ENCODE measurements at regions of chr16 and their contacts with region 1.

Region 1: GRCh38 chr16:3282730-3283524 is at the start of gene ZNF263:
- DNase-seq: peak; percentile 89
- ATAC-seq: peak; percentile 87
- H3K4me3 Mint-ChIP-seq: peak within 1 kb of the TSS; percentile 95
- H3K27ac Mint-ChIP-seq: peak within 1 kb of the TSS; percentile 99
- H3K4me1 Mint-ChIP-seq: peaks cover 40% of the 10 kb centered on the region
- H3K27me3 Mint-ChIP-seq: no peaks in the 10 kb centered on the region
- CTCF ChIP-seq: no peak
- total RNA-seq, gene ZNF263: 42.7 and 42.9 TPM in 2 replicates

Region 2: DNA sequence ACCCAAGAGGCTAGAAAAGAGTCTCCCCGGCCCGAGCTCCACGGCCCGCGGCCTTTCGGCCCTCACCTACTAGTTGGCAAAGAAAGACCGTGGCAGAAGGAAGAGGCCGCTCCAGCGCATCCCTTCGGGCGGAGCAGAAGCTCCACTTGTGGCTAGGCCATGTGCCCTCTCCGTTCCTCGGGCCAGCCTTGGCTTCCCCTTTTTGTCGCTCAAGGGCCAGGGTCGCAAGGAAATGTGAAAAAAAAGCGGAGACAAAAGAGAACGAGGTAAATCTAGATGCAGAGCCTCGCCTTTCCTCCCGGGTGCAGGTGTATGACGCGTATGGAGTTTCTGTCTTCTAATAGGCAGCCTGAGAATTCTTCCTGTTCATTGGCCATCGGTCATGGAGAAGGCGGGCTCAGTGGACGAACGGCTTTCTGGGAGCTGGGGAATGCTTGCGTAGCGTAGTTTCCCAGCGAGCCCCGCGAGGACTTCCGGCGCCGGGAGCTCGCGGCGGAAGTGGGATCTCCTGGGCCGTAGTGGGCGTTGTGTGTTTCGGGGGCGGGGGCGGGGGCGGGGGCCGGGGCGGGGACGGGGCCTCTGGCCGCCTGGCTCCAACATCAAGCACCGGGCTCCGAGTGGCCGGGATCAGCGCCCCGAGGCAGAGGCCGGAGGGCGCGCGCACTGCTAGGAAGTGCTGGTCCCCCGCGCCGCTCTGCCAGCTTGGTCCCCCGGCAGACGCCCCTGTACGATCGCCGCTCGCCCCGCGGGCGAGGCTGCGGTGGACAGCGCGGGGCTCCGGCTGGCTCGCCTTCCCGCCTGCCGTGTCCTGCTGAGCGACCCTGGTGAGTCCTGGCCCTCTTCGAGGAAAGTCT is 148.1 kb before region 1 on chr16 and contains the start of gene ZNF213:
- CTCF ChIA-PET with region 1: no interaction called
- POLR2A ChIA-PET with region 1: interaction called, 9 read pairs
- intact Hi-C with region 1: loop called (anchors 1 kb)
- DNase-seq: peak; percentile 81
- ATAC-seq: peak; percentile 99
- H3K4me3 Mint-ChIP-seq: peak within 1 kb of the TSS; percentile 97
- H3K27ac Mint-ChIP-seq: peak within 1 kb of the TSS; percentile 97
- H3K4me1 Mint-ChIP-seq: peaks cover 24% of the 10 kb centered on the region
- H3K27me3 Mint-ChIP-seq: no peaks in the 10 kb centered on the region
- CTCF ChIP-seq: no peak
- total RNA-seq, gene ZNF213: 5.6 and 5.7 TPM in 2 replicates

Region 3: DNA sequence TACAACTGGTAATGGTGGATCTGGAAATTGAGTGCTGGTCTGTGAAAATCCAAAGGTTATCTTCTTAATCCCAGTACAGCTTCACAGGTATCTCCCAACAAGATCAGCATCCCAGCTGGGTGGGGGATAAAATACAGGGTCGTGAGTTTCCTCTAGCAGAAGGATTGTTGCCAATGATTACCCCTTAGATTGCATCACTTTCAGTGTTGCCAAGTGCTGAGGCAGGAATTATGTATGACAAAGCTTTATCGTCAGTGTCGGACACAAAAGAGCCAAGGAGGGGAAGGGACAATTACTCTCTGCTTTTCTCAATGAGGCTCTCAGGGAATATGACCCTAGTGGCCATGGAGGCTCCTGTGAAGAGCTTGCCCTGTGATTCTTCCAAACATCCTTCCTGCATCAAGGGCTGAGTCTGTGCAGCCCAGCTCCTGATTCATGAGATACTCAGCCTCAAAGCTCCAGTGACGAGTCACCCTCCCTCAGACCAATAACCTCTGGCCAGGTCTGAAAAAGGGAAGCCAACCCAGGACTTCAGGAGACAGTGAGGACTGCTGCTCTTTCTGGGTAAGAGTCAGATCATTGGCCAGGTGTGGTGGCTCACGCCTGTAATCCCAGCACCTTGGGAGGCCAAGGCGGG is 79.9 kb before region 1 on chr16:
- CTCF ChIA-PET with region 1: no interaction called
- POLR2A ChIA-PET with region 1: no interaction called
- intact Hi-C with region 1: no loop called
- DNase-seq: no peak
- ATAC-seq: no peak
- H3K4me3 Mint-ChIP-seq: no peak overlapping the region
- H3K27ac Mint-ChIP-seq: no peak overlapping the region
- H3K4me1 Mint-ChIP-seq: no peaks in the 10 kb centered on the region
- H3K27me3 Mint-ChIP-seq: peaks cover 37% of the 10 kb centered on the region
- CTCF ChIP-seq: no peak

Region 4: DNA sequence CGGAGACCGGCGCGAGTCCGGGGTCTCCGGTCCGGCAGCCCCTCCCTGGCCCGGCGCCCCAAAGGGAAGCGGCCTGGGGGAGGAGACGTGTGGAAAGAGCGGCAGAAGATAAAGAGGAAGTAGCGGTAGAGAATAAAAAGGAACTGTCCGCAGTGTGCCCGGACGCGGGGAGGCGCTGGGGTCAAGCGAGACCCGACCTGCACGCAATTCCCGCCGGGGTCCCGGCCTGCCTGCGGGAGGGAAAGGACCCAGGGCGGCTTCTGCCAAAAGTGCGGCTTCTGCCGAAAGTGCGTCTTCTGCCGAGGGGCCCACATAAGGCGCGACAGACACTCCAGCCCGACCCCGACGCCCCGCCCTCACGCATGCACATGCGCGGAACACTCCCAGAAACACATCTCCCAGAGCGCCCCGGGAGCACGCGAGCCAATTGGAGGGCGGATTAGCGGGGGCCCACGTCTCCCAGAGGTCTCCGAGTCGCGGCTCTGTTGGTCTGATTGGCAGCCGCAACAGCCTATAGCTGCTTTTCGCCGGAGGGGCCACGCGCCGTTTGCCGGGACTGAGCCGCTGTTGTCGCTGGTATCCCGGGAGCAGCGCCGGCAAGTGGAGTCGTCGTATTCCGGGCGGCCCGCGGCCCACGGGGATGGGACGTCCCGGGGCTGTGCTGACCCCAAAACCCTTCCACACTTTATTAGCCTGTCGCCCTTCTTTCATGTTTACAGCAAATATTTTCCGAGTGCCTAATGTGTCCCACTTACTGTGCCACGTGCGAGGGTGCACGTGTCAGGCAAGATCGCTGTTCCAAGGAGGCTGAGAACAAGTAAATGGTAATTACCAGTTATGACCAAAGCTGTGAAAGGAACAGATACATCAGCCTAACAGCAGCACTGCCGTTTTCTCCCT is 18.5 kb before region 1 on chr16:
- CTCF ChIA-PET with region 1: interaction called, 8 read pairs
- POLR2A ChIA-PET with region 1: interaction called, 82 read pairs
- intact Hi-C with region 1: loop called (anchors 1 kb)
- DNase-seq: peak; percentile 95
- ATAC-seq: peak; percentile 89
- H3K4me3 Mint-ChIP-seq: peak overlapping the region; percentile 89
- H3K27ac Mint-ChIP-seq: peak overlapping the region; percentile 95
- H3K4me1 Mint-ChIP-seq: peaks cover 27% of the 10 kb centered on the region
- H3K27me3 Mint-ChIP-seq: no peaks in the 10 kb centered on the region
- CTCF ChIP-seq: no peak

Region 5: GRCh38 chr16:3364774-3365427 is 82.0 kb after region 1 on chr16:
- CTCF ChIA-PET with region 1: no interaction called
- POLR2A ChIA-PET with region 1: interaction called, 3 read pairs
- intact Hi-C with region 1: loop called (anchors 1 kb)
- DNase-seq: peak; percentile 65
- ATAC-seq: peak; percentile 95
- H3K4me3 Mint-ChIP-seq: peak overlapping the region; percentile 82
- H3K27ac Mint-ChIP-seq: peak overlapping the region; percentile 84
- H3K4me1 Mint-ChIP-seq: peaks cover 12% of the 10 kb centered on the region
- H3K27me3 Mint-ChIP-seq: peaks cover 9% of the 10 kb centered on the region
- CTCF ChIP-seq: no peak

Region 6: DNA sequence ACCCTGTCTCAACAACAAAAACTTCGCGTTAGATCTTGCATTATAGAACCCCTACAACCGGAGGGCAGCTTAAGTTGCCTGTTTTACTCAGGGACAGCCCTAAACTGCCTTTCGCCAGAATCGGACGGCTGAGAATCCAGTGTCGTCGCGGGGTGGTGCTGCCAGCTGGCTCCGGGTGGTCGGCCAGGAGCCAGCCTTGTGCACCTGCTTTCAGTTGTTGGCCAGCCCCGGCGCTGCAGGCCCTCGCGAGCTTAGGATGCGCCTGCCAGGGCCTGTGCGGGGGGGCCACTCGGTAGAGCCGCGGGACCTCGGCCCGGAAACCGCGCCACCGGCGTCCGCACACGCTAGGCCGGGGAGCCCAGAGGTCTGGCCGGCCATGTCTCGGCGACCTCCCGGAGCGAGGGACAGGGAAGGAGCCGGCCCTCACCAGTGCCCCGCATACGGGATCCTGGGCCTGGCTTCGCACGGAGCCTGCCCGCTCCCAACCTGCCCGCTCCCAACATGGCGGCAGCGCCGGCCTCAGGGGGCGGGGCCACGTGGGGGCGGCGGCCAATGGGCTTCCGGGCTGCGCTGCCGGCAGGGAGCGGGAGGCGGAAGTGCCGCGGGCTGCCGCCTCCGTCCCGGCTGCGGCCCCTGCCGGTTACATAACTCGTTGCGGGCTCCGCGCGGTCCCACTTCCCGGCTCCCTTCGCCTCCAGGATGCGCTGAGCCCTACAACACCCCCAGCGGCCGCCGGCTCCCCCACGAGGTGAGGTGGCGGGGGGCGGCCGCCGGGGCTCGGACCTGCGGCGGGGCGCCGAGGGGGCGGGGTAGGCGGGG is 174.7 kb after region 1 on chr16:
- CTCF ChIA-PET with region 1: no interaction called
- POLR2A ChIA-PET with region 1: interaction called, 24 read pairs
- intact Hi-C with region 1: loop called (anchors 1 kb)
- DNase-seq: peak; percentile 91
- ATAC-seq: peak; percentile 90
- H3K4me3 Mint-ChIP-seq: peak overlapping the region; percentile 82
- H3K27ac Mint-ChIP-seq: peak overlapping the region; percentile 85
- H3K4me1 Mint-ChIP-seq: peaks cover 44% of the 10 kb centered on the region
- H3K27me3 Mint-ChIP-seq: no peaks in the 10 kb centered on the region
- CTCF ChIP-seq: no peak

Region 7: DNA sequence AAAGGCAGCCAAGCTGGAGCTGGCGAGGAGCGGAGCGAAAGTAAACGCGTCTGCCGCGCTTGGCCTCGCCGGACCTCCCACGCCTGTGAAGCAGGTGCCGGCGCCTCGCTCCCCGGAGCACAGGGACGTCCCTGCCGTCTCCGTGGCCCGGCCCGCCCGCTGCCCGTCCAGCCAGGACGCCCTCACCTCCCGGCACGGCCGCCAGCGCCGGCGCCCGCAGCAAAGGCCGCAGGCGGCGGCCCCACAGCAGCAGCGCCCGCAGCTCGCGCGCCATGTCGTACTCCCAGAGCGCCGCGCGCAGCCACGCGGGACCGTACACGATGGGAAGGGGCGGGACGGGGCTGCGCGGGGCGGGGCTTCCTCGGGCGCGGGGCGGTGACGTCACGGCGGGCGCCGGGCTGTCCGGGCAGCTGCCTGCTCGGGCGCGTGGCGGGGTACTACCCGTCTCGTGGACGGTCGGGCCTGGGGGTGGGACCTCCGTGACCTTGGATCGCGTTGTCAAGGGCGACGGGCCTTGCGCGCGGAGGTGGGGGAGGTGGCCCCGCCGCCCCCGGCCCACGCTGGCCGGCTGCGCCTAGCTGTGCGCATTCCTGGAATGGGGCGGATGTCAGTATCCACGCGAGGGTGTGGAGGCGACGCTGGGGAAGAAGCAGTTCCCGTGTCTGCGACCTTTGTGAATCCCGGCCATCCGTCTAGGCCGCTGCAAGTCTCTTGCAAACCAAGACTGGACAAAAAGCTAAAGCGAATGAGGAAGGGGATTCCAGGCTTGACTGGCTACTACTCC is 434.5 kb after region 1 on chr16 and contains the start of gene TRAP1:
- CTCF ChIA-PET with region 1: no interaction called
- POLR2A ChIA-PET with region 1: no interaction called
- intact Hi-C with region 1: loop called (anchors 5 kb)
- DNase-seq: peak; percentile 90
- ATAC-seq: peak; percentile 95
- H3K4me3 Mint-ChIP-seq: peak within 1 kb of the TSS; percentile 91
- H3K27ac Mint-ChIP-seq: peak within 1 kb of the TSS; percentile 85
- H3K4me1 Mint-ChIP-seq: peaks cover 20% of the 10 kb centered on the region
- H3K27me3 Mint-ChIP-seq: no peaks in the 10 kb centered on the region
- CTCF ChIP-seq: no peak
- total RNA-seq, gene TRAP1: 78.7 and 82.2 TPM in 2 replicates

Measured in activated B cell treated with CpG ODN at 0.5 μM for 24 hours (primary cell).